ENCODE measurements at regions of chr1 and their contacts with region 1.

Region 1: DNA sequence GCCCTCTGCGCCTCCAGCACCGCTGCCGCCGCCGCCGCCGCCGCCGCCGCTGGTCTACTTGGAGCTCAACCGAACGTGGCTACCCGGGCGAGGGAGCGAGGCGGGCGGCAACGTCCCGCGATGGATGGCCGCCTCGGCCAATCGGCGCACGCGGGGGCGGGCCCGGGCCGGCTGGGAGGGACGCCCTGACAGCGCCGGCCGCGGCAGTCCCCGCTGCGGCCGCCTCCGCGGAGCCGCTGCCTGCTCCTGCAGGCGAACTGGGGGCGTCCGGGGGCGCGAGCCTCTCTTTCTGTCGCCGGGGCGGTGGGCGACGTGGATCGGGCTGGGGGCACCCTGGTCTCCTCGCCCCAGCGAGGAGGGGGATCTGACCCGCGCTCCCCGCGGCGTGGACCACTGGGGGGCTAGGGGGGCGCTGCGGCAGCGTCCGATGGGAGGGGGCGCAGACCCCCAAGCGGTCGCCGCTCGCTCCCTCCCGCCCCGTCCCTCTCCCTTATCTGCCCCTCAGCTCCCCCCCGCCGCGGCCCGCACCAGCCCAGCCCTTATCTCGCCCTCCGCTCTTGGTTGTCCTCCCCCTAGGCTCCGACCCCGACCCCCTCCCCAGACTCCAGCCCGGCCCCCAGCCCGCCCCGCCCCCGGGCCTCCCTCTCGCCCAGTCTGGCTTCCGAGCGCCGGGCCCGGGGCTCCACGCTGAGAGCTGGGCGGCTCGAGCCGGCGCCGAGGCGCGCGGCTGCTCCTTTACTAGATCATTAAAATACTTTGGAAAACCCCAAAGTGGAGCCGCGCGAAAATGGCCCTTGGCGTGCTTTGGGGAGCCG is at the start of gene SSBP3:
- DNase-seq: peak; percentile 82 to 97 (median 90)
- ATAC-seq: peak; percentile 92
- H3K4me3 ChIP-seq: peak within 1 kb of the TSS; percentile 74
- H3K4me3 Mint-ChIP-seq: peak within 1 kb of the TSS; percentile 97
- H3K27ac ChIP-seq: peak within 1 kb of the TSS; percentile 60 to 90
- H3K27ac Mint-ChIP-seq: peak within 1 kb of the TSS; percentile 92
- H3K4me1 ChIP-seq: peaks cover 67% of the 10 kb centered on the region
- H3K4me1 Mint-ChIP-seq: peaks cover 73% of the 10 kb centered on the region
- H3K27me3 ChIP-seq: no peaks in the 10 kb centered on the region
- H3K27me3 Mint-ChIP-seq: no peaks in the 10 kb centered on the region
- CTCF ChIP-seq: no peak
- total RNA-seq, gene SSBP3: 50.6 to 52.4 TPM

Region 2: GRCh38 chr1:53945433-53946251 is 460.9 kb before region 1 on chr1 and contains the start of gene IFT25:
- CTCF ChIA-PET with region 1: no interaction called
- POLR2A ChIA-PET with region 1: interaction called, 6 read pairs
- intact Hi-C with region 1: loop called in 1 of 2 experiments (anchors 5 kb)
- DNase-seq: peak; percentile 96 to 100 (median 98)
- ATAC-seq: peak; percentile 77
- H3K4me3 ChIP-seq: peak within 1 kb of the TSS; percentile 89
- H3K4me3 Mint-ChIP-seq: peak within 1 kb of the TSS; percentile 99
- H3K27ac ChIP-seq: peak within 1 kb of the TSS; percentile 60 to 80
- H3K27ac Mint-ChIP-seq: peak within 1 kb of the TSS; percentile 91
- H3K4me1 ChIP-seq: peaks cover 28% of the 10 kb centered on the region
- H3K4me1 Mint-ChIP-seq: peaks cover 59% of the 10 kb centered on the region
- H3K27me3 ChIP-seq: no peaks in the 10 kb centered on the region
- H3K27me3 Mint-ChIP-seq: no peaks in the 10 kb centered on the region
- CTCF ChIP-seq: no peak
- total RNA-seq, gene IFT25: 12.7 to 13.9 TPM

Region 3: GRCh38 chr1:54199765-54200518 is 206.6 kb before region 1 on chr1 and contains the starts of genes CYB5RL and MRPL37:
- CTCF ChIA-PET with region 1: no interaction called
- POLR2A ChIA-PET with region 1: interaction called, 26 read pairs
- intact Hi-C with region 1: loop called (anchors 1 to 2 kb)
- DNase-seq: peak; percentile 78 to 96 (median 84)
- ATAC-seq: peak; percentile 98
- H3K4me3 ChIP-seq: peak within 1 kb of the TSS; percentile 96
- H3K4me3 Mint-ChIP-seq: peak within 1 kb of the TSS; percentile 92
- H3K27ac ChIP-seq: peak within 1 kb of the TSS; percentile 22 to 37
- H3K27ac Mint-ChIP-seq: peak within 1 kb of the TSS; percentile 87
- H3K4me1 ChIP-seq: peaks cover 25% of the 10 kb centered on the region
- H3K4me1 Mint-ChIP-seq: peaks cover 34% of the 10 kb centered on the region
- H3K27me3 ChIP-seq: no peaks in the 10 kb centered on the region
- H3K27me3 Mint-ChIP-seq: no peaks in the 10 kb centered on the region
- CTCF ChIP-seq: no peak
- total RNA-seq, gene CYB5RL: 2.0 to 2.1 TPM
- total RNA-seq, gene MRPL37: 24.0 to 24.4 TPM

Region 4: GRCh38 chr1:54355931-54356679 is 50.4 kb before region 1 on chr1:
- CTCF ChIA-PET with region 1: no interaction called
- POLR2A ChIA-PET with region 1: interaction called, 4 read pairs
- intact Hi-C with region 1: loop called in 1 of 2 experiments (anchors 2 kb)
- DNase-seq: peak in 4 of 14 experiments; percentile 7 to 46 (median 42)
- ATAC-seq: peak; percentile 8
- H3K4me3 ChIP-seq: peak overlapping the region; percentile 42
- H3K4me3 Mint-ChIP-seq: peak overlapping the region; percentile 91
- H3K27ac ChIP-seq: peak overlapping the region in 1 of 2 donors; percentile 5
- H3K27ac Mint-ChIP-seq: peak overlapping the region; percentile 94
- H3K4me1 ChIP-seq: peaks cover 57% of the 10 kb centered on the region
- H3K4me1 Mint-ChIP-seq: peaks cover 93% of the 10 kb centered on the region
- H3K27me3 ChIP-seq: no peaks in the 10 kb centered on the region
- H3K27me3 Mint-ChIP-seq: no peaks in the 10 kb centered on the region
- CTCF ChIP-seq: no peak

Region 5: DNA sequence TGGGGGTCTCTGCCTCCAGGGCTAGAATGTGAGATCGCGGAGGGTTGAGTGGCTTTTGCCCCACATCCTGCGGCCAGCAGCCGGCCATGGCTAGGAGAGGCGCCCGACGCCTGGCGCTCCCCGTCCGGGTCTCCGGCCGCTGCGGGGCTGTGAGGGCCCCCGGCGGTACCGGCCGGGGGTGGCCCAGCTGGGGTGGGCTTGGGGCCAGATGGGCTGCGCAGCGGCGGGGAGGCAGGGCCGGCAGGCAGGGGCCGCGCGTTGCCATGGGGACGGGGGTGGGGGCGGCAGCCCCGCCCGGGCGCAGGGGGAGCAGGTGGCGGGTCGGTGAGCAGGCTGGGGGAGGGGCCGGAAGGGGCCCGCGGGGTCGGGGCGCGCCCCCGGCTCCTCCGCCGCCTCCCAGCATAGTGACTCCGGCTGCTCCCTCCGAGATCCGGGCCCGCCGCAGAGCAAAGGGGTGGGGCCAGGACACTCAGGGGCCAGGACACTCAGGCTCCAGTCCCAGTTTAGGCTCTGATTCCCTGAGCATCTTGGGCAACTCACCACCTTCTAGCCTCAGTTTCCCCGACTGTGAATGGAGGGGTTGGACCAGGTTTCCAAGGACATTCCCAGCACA is 68.2 kb after region 1 on chr1:
- CTCF ChIA-PET with region 1: no interaction called
- POLR2A ChIA-PET with region 1: interaction called, 16 read pairs
- intact Hi-C with region 1: no loop called
- DNase-seq: peak in 8 of 14 experiments; percentile 24 to 67 (median 50)
- ATAC-seq: peak; percentile 56
- H3K4me3 ChIP-seq: peak overlapping the region; percentile 56
- H3K4me3 Mint-ChIP-seq: peak overlapping the region; percentile 91
- H3K27ac ChIP-seq: peak overlapping the region; percentile 70 to 79
- H3K27ac Mint-ChIP-seq: peak overlapping the region; percentile 88
- H3K4me1 ChIP-seq: peaks cover 48% of the 10 kb centered on the region
- H3K4me1 Mint-ChIP-seq: peaks cover 60% of the 10 kb centered on the region
- H3K27me3 ChIP-seq: no peaks in the 10 kb centered on the region
- H3K27me3 Mint-ChIP-seq: no peaks in the 10 kb centered on the region
- CTCF ChIP-seq: no peak

Region 6: DNA sequence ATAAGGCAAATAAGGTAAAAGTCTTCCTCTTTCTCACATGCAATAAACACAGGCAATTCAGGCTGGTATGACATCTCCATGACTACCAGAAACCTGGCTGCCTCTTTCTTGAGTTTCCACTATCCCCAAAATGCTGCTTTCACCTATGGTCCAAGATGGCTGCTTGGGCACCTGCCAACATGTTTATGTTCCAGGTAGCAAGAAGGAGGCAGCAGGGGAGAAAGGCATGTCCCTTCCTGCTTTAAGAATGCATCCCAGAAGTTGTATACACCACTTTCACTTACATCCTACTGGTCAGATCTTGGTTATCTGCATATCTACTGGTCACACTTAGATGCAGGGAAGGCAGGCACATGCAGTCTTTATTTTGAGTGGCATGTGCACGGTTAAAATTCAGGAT is 122.1 kb after region 1 on chr1:
- CTCF ChIA-PET with region 1: no interaction called
- POLR2A ChIA-PET with region 1: no interaction called
- intact Hi-C with region 1: no loop called
- DNase-seq: no peak
- ATAC-seq: no peak
- H3K4me3 ChIP-seq: no peak overlapping the region
- H3K4me3 Mint-ChIP-seq: no peak overlapping the region
- H3K27ac ChIP-seq: no peak overlapping the region
- H3K27ac Mint-ChIP-seq: no peak overlapping the region
- H3K4me1 ChIP-seq: no peaks in the 10 kb centered on the region
- H3K4me1 Mint-ChIP-seq: no peaks in the 10 kb centered on the region
- H3K27me3 ChIP-seq: no peaks in the 10 kb centered on the region
- H3K27me3 Mint-ChIP-seq: no peaks in the 10 kb centered on the region
- CTCF ChIP-seq: no peak

Region 7: GRCh38 chr1:54764133-54764921 is 357.8 kb after region 1 on chr1 and contains the start of gene PARS2:
- CTCF ChIA-PET with region 1: no interaction called
- POLR2A ChIA-PET with region 1: no interaction called
- intact Hi-C with region 1: loop called in 1 of 2 experiments (anchors 5 kb)
- DNase-seq: peak; percentile 88 to 99 (median 94)
- ATAC-seq: peak; percentile 96
- H3K4me3 ChIP-seq: peak within 1 kb of the TSS; percentile 98
- H3K4me3 Mint-ChIP-seq: peak within 1 kb of the TSS; percentile 98
- H3K27ac ChIP-seq: peak within 1 kb of the TSS in 1 of 2 donors; percentile 71
- H3K27ac Mint-ChIP-seq: peak within 1 kb of the TSS; percentile 70
- H3K4me1 ChIP-seq: peaks cover 8% of the 10 kb centered on the region
- H3K4me1 Mint-ChIP-seq: peaks cover 26% of the 10 kb centered on the region
- H3K27me3 ChIP-seq: no peaks in the 10 kb centered on the region
- H3K27me3 Mint-ChIP-seq: no peaks in the 10 kb centered on the region
- CTCF ChIP-seq: no peak
- total RNA-seq, gene PARS2: not detected

Measured in CD4-positive, alpha-beta T cell (primary cell).